Vagina (tissue), 2 donors: ENCODE measurements at regions of chr1 and their contacts with region 1.

Region 1: DNA sequence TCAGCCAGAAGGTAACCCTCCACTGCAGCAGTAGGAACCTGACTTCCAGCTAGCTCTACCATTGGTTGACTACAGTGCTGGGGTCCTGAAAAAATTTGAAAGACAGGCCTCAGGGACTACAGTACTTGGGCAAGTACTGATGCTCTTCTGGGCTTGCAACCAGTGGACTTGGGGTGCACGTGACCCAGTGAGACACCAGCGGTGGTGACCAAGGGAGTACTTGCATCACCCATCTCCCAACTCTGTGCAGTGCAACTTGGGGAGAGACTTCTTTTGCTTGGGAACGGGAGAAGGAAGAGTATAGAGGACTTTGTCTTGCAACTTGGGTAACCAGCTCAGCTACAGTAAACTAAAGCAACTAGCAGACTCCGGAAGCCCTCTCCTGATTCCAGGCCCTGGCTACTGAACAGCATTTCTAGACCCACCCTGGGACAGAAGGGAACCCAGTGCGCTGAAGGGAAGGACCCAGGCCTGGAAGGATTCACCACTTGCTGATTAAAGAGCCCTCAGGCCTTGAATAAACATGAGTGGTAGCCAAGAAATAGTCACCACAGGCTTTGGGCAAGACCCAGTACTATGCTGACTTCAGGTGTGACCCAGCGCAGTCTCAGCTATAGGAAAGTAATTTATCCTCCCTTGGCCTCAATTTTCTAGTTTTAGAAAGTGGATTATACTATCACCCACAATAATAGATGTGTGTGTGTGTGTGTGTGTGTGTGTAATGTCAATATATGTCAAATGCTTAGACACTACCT is 45.6 kb downstream of the TNNI3K start:
- DNase-seq: no peak
- H3K4me3 ChIP-seq: no peak overlapping the region
- H3K27ac ChIP-seq: no peak overlapping the region
- H3K4me1 ChIP-seq: no peaks in the 10 kb centered on the region
- H3K27me3 ChIP-seq: no peaks in the 10 kb centered on the region
- CTCF ChIP-seq: no peak
- POLR2A ChIP-seq: no peak

Region 2: GRCh38 chr1:74215229-74215628 is 65.6 kb before region 1 on chr1:
- intact Hi-C with region 1: loop called (anchors 10 kb)
- DNase-seq: no peak
- H3K4me3 ChIP-seq: no peak overlapping the region
- H3K27ac ChIP-seq: no peak overlapping the region
- H3K4me1 ChIP-seq: no peaks in the 10 kb centered on the region
- H3K27me3 ChIP-seq: no peaks in the 10 kb centered on the region
- CTCF ChIP-seq: no peak
- POLR2A ChIP-seq: no peak